ENCODE measurements at regions of chr19 and their contacts with region 1.

Region 1: DNA sequence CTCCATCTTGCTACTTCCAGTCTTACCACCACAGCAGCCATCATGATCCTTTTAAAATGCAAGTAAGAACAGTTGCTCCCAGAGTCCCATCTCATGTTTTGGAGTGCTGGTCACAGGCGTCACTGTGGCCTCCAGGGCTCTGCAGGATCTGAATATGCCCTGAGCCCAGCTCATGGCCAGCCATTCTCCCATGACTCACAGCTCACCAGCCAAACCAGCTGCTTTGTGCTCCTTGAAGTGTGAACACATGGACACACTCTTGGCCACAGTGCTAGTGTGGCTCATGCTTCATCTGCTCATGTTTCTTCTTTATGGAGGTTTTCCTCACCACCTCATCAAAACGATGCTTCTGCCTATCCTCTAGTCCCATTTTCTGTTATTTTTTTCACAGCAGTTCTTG is 466.5 kb downstream of the UQCRFS1 start:
- DNase-seq: no peak
- ATAC-seq: no peak
- H3K4me3 ChIP-seq: no peak overlapping the region
- H3K27ac ChIP-seq: no peak overlapping the region
- H3K4me1 ChIP-seq: no peaks in the 10 kb centered on the region
- H3K27me3 ChIP-seq: peaks cover 0 to 3% (median 0%) of the 10 kb centered on the region in 7 donors
- CTCF ChIP-seq: no peak

Region 2: GRCh38 chr19:28980236-28980868 is 233.9 kb after region 1 on chr19:
- intact Hi-C with region 1: loop called in 1 of 10 experiments (anchors 10 kb)
- DNase-seq: no peak
- ATAC-seq: peak in 3 of 8 donors; percentile 34 to 64 (median 50)
- H3K4me3 ChIP-seq: no peak overlapping the region
- H3K27ac ChIP-seq: no peak overlapping the region
- H3K4me1 ChIP-seq: no peaks in the 10 kb centered on the region
- H3K27me3 ChIP-seq: peaks cover 0 to 22% (median 0%) of the 10 kb centered on the region in 7 donors
- CTCF ChIP-seq: peak in 8 of 9 donors; percentile 13 to 50 (median 38)